ENCODE measurements at regions of chr7 and their contacts with region 1.

Region 1: GRCh38 chr7:100827330-100828227 is at the start of gene EPHB4:
- DNase-seq: peak; percentile 80
- H3K4me3 Mint-ChIP-seq: peak within 1 kb of the TSS; percentile 96
- H3K27ac Mint-ChIP-seq: peak within 1 kb of the TSS; percentile 86
- H3K4me1 Mint-ChIP-seq: peaks cover 21% of the 10 kb centered on the region
- H3K27me3 Mint-ChIP-seq: no peaks in the 10 kb centered on the region
- CTCF ChIP-seq: peak; percentile 20
- total RNA-seq, gene EPHB4: 48.8 and 51.3 TPM in 2 replicates

Region 2: GRCh38 chr7:100874577-100875355 is 47.2 kb after region 1 on chr7 and contains the start of gene SRRT:
- CTCF ChIA-PET with region 1: no interaction called
- POLR2A ChIA-PET with region 1: interaction called, 10 read pairs
- intact Hi-C with region 1: no loop called
- DNase-seq: peak; percentile 99
- H3K4me3 Mint-ChIP-seq: peak within 1 kb of the TSS; percentile 97
- H3K27ac Mint-ChIP-seq: peak within 1 kb of the TSS; percentile 98
- H3K4me1 Mint-ChIP-seq: peaks cover 30% of the 10 kb centered on the region
- H3K27me3 Mint-ChIP-seq: no peaks in the 10 kb centered on the region
- CTCF ChIP-seq: no peak
- total RNA-seq, gene SRRT: 111 and 142 TPM in 2 replicates

Region 3: GRCh38 chr7:100896732-100897608 is 69.4 kb after region 1 on chr7:
- CTCF ChIA-PET with region 1: no interaction called
- POLR2A ChIA-PET with region 1: no interaction called
- intact Hi-C with region 1: no loop called
- DNase-seq: no peak
- H3K4me3 Mint-ChIP-seq: no peak overlapping the region
- H3K27ac Mint-ChIP-seq: no peak overlapping the region
- H3K4me1 Mint-ChIP-seq: peaks cover 6% of the 10 kb centered on the region
- H3K27me3 Mint-ChIP-seq: peaks cover 36% of the 10 kb centered on the region
- CTCF ChIP-seq: peak; percentile 75

Measured in MCF 10A (cell line).